ENCODE measurements at regions of chr1 and their contacts with region 1.

Region 1: DNA sequence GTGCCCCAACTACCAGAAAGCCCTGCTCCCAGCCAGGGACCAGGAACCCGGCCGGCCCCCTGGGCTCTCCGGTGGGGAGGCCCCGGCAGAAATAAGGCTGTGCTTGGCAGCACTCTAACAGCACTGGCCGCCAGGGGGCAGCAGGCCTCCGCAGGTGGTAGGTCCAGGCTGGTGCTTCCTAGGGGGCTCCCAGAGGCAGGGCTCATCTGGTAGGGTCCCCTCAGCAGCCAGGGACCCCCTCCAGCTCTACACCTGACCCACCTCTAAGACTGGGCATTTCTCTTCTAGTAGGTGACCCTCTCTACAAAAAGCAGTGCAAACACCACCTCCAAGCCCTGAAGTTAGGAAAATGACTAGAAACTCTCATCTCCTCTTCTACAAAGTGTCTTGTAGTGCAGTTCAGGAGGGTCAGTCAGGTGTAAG is 85.6 kb downstream of the STUM start:
- DNase-seq: peak; percentile 83
- H3K4me3 ChIP-seq: no peak overlapping the region
- H3K27ac ChIP-seq: peak overlapping the region; percentile 46
- H3K4me1 ChIP-seq: peaks cover 62% of the 10 kb centered on the region
- H3K27me3 ChIP-seq: no peaks in the 10 kb centered on the region
- CTCF ChIP-seq: peak; percentile 97

Region 2: DNA sequence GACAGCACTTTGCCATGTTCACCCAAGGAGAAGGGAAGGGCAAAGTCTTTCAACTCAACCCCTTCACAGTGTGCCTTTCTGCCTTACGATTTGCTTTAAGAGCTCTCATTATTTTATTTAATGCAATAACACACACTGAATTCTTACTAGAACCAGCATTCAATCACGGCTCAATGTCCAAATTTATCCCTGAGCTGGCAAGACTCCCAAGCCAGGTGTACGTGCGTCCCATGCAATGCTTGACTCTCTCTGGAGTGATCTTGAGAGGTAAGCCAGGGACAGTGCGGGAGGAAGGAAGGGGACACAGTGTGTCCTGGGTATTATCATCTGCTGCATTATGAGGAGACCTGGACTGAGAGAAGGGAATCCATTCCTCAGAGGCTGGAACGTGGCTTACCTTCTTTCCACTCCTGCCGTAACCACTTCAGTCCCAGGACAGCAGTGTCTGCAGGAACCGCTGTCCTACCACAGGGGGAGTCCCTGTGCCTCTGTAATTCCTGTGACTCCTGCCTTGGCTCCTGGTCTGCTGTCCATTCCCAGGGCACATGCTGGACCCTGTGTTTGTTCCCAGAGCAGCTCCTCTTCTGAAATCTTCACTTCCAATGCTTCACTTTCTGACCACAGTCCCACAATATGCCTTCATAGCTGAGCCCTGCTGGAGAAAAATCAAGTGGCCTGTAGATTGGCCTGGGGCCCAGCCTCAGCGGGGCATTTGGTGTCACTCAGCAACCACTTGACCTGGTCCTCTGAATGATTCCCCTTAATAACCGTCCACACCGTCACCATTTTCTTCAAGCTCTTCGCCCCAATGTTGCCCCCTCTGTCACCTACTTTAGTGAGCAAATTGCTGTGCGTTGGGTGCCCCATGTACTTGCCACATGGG is 114.2 kb before region 1 on chr1:
- intact Hi-C with region 1: no loop called
- DNase-seq: no peak
- H3K4me3 ChIP-seq: no peak overlapping the region
- H3K27ac ChIP-seq: no peak overlapping the region
- H3K4me1 ChIP-seq: peaks cover 22% of the 10 kb centered on the region
- H3K27me3 ChIP-seq: no peaks in the 10 kb centered on the region
- CTCF ChIP-seq: peak; percentile 34

Region 3: DNA sequence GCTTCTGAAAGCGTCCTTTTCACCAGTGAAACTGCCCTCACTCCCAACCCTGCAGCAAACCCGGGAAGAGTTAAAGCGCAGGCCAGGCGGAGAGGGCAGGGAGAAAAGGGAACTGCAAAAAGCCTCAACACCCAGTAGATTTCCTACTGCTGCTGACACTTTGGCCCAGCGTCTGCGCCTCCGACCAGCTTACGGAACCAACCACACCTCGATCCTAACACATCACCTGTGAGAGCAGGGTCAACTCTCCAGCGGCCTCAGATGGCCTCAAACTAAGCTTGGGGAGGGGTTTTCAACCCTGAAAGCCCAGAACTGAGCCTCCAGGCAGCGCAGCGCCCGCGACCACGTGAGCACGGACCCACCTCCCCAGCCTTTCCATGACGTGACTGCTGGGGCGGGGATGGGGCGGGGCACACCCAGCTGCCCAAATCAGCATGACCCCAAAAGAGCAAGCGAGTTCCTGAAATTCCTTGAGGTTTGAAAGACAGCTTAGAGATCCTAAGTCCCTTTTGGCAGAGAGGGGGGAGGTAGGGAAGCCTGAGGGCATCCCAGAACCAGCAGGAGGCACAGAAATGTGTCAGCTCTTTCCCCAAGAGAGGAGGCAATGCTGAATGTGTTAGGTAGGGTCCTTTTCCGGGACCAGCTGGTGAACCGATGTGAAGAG is 45.8 kb after region 1 on chr1:
- intact Hi-C with region 1: loop called (anchors 10 kb)
- DNase-seq: peak; percentile 90
- H3K4me3 ChIP-seq: peak overlapping the region; percentile 63
- H3K27ac ChIP-seq: peak overlapping the region; percentile 91
- H3K4me1 ChIP-seq: peaks cover 100% of the 10 kb centered on the region
- H3K27me3 ChIP-seq: no peaks in the 10 kb centered on the region
- CTCF ChIP-seq: no peak

Region 4: DNA sequence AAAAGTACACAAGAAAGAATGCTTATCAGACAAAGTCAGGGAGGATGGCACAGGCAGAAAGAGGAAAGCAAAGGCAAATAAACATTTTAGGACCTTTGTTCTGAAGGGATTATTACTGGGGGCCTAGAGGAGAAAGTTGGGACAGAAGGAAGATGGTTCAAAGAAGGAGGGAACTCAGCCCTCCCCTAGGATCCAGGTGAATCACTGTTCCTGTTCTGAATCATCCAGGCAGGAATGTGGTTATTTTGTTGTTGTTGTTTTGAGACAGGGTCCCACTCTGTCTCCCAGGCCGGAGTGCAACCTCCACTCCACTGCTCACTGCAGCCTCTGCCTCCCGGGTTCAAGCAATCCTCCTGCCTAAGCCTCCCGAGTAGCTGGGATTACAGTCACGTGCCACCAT is 197.8 kb after region 1 on chr1:
- intact Hi-C with region 1: loop called (anchors 5 kb)
- DNase-seq: no peak
- H3K4me3 ChIP-seq: no peak overlapping the region
- H3K27ac ChIP-seq: no peak overlapping the region
- H3K4me1 ChIP-seq: peaks cover 16% of the 10 kb centered on the region
- H3K27me3 ChIP-seq: no peaks in the 10 kb centered on the region
- CTCF ChIP-seq: no peak

Measured in left ventricle myocardium inferior (tissue), 1 donor.